ENCODE measurements at regions of chr15 and their contacts with region 1.

Region 1: DNA sequence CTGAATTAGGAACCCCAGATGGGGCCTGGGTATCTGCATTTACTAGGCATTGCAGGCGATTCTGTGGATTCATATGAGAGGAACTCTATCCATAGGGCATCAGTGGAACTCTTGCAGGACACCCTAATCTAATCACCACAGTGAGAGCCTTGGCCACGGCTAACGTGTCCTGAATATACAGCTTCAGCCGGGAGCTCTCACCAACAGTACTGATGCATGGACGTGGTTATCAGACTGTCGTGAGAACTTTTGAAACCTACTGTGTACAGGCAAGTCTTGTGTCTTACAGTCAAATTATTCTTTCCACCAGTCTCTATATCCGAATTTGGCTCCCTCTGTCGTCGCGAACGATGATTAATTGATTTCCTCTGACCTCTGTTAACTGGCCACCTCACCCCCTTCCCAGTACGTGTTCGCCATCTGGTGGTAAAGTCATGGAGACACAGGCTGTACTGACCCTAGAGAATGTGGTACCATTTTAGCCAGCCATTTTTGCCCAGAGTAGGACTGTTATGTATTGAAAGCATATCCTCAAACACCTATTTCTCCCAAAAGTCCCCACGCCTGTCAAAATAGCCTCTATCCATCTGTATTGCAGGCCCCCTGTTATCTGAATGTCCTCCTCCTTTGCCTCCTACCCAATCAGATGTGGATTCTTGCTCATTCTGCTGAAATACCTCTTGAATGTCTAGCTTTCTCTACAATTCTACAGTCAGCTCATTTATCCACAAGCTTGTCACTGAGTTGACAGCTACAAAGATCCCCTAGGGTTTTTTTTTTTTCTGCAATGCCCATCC is 39.7 kb downstream of the GLDN start:
- DNase-seq: peak; percentile 47
- ATAC-seq: peak; percentile 96

Region 2: DNA sequence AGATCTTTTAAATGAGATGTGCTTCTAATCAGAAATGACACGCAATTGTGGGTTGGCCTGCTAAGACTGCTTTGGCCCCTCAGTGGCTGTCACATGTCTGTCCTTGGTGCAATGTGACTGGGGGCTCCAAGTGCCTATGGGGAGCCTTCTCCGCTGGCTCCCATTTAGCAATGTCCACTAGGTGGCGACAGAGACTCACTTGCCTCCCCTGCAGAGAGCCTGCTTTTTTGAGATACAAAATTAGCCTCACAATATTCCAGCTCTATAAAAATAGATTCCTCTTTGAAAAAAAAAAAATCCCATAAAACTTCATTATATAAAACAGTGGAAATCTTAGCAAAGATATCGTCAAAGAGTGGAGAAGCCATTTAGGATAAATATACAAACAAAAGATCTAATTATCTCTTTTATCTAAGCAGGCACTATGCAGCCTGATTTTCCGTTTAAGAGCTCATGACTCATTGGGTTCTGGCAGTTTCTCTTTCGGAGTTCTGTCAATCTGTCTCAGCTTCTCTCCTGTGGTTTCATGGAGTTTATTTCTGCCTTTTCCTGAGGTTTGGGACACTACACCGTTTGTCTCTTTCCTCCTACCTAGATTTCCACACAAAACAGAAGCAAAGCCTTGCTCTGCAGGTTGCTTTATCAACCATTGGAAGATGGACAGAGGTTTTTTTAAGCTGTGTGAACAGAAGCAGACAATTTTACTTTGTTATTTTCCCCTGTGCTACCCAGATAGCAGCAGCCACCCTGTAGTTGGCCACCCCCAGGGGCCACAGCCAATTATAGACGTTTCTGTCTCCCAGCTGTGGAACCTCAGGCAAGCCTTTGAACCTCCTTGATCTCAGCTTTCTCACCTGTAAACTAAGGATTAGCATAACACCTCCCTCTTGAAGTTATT is 218.1 kb before region 1 on chr15:
- intact Hi-C with region 1: loop called (anchors 10 kb)
- DNase-seq: peak; percentile 68
- ATAC-seq: peak; percentile 97

Region 3: DNA sequence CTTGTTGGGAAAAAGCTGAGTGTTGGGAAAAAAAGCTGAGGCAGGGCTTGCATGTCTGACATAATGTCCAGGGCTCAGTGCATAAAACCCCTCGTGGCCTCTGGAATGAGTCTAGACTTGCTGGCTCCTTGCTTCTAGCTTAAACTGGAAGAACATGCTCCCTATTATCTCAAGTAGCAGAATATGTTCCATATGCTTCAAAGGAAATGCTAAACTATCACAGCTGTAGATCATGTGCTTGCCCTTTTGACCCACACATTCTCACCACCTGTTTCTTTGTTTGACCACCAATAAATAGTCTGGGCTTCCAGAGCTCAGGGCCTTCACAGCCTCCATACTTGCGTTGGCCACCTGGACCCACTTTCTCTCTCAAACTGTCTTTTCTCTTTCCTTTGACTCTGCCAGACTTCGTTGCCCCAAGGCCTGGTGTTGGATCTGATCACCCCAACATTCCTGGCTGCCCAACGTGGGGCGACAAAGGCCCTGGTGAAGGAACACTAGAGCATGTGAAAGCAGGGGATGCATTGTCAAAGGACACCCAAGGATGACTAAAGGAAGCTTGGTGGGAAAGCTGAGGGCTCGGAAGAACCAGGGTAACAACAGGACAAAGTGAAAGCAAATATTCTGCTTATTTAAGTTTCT is 98.8 kb before region 1 on chr15:
- intact Hi-C with region 1: loop called (anchors 2 kb)
- DNase-seq: no peak
- ATAC-seq: peak; percentile 11

Measured in Right ventricle myocardium superior (tissue), 1 donor.